GM10248 (cell line): ENCODE measurements at regions of chr4 and their contacts with region 1.

Region 1: DNA sequence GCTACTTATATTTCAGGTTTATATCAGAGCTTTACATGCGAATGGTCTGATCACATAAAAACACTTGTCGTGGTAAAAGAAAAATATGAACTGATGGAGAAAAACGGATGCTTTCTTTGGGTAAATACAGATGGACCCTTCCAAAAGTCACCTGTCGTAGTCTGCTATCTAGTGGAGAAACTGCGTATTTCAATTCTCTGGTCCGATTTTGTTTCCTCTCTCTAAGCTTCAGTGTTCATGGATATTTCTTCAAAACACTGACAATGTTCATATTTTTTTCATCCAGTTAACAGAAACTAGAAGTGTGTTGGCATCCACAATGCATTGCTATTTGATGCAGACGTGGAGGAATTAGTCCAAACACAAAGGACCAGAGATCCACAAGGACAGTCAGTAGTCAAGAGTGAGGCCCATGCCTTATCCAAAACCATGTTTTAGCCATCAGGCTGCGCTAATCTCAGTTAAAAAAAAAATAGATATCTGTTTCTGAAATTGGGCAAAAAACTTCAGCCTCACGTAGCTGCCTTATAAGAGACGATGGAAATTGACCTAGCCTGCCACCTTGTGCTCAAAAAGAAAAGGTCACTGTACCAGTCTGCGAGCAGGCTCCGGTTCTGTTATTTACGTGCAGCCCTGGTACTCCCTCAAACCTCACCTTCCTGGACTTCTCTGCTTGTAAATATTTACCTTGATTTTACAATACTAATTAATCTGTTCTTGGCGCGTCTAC is 16.0 kb downstream of the MEPE start:
- DNase-seq: peak; percentile 26
- CTCF ChIP-seq: peak; percentile 66

Region 2: DNA sequence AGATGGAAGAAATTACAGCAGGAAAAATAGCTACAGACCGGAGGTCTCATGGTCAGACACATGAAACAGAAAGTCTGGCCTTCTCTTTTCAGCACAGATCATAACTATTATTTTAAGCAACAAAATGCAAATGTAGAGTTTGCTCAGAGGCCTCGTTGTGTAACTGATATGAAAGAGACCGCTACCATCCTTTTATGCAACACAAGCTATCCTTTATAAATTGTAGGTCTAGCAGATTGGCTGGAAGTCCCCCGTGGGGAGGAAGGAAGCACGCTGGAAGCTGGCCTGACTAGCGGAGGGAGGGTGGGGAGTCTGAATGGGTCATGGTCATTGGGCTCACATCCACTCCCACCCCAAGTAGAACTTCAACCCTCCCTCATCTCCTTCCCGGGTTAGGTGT is 171.1 kb before region 1 on chr4:
- CTCF ChIA-PET with region 1: interaction called, 10 read pairs
- POLR2A ChIA-PET with region 1: no interaction called
- DNase-seq: no peak
- CTCF ChIP-seq: no peak

Region 3: DNA sequence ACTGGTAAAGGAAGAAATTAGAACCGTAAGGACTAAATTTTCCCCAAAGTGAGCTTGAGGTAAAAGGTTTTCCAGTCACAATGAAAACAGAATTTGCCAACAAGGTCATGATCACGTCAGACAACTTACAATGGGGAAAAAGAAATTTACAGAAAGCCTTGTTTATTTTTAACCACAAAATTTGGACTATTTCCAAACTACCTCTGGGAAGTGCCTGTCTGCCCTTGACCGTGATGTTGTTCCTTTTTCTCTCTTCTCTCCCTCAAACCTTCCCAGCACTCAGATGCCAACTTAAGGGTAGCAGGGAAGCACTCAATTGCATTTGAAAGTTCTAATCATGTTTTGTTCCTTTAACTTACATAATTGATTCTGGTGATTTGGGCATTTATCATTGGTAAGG is 16.5 kb after region 1 on chr4:
- CTCF ChIA-PET with region 1: interaction called, 24 read pairs
- POLR2A ChIA-PET with region 1: no interaction called
- DNase-seq: no peak
- CTCF ChIP-seq: no peak

Region 4: DNA sequence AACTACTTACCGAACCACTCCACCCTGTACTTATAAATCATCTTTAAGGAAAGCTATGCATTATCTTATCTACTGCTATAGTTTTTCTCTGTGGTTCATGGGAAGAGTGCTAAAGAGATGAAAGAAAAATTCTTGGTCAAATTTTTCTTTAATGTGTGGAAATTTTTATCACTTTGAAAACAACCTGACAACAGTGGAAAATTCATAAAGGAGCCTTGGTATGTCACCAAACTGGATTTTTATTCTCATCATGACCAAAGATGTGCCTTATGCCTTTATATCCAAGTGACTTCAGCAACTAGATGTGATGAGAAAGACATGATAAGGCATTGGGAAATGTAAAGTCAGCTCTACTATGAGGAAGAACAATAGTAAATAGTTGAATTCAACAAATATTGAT is 59.6 kb after region 1 on chr4:
- CTCF ChIA-PET with region 1: no interaction called
- POLR2A ChIA-PET with region 1: no interaction called
- DNase-seq: no peak
- CTCF ChIP-seq: no peak

Region 5: DNA sequence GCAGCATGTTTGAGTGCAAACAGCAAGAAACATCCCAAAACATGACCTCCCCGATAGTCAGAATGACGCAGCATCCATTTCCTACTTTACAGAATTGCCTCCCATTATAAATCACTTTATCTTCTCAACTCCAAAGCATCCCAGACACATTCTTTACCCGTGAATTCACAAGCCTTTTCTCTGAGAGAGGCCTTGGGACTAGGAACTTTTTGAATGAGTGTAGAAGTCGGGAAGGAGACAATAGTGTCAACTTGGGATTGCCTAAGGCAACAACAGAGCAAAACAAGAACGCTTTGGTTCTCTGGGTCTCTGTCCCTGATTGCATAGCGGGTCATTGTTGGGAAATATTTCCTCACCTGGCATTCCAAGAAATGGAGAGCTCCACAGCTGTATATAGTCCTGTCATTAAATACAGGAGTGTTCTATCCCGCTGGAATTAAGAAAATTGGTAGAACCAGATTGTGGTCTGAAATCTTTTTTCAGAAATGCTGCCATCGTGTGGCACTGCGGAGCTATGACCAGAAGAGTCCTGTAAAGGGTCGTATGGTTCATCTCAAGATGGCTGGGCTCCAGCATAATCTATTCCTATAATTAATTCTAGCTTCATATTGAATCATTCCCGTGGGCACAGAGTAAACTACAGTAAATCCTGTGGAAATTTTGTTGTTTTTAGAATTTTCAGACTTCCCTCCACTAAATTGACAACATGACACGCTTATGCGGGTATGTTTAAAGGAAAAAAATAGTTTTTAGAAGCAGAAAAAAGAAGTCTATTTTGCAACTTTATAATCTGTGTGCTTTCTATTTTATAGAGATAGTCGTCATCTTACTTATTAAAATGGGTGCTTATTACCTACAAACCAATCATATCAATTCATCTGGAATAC is 124.7 kb after region 1 on chr4:
- CTCF ChIA-PET with region 1: interaction called, 12 read pairs
- POLR2A ChIA-PET with region 1: no interaction called
- DNase-seq: peak; percentile 40
- CTCF ChIP-seq: peak; percentile 77